ENCODE measurements at regions of chr20 and their contacts with region 1.

Region 1: GRCh38 chr20:54097236-54097529 is 26.8 kb upstream of the BCAS1 start:
- DNase-seq: no peak
- ATAC-seq: no peak
- H3K4me3 ChIP-seq: no peak overlapping the region
- H3K27ac ChIP-seq: no peak overlapping the region
- H3K4me1 ChIP-seq: no peaks in the 10 kb centered on the region
- H3K27me3 ChIP-seq: no peaks in the 10 kb centered on the region
- CTCF ChIP-seq: no peak
- POLR2A ChIP-seq: no peak

Region 2: GRCh38 chr20:54199721-54200176 is 102.6 kb after region 1 on chr20:
- intact Hi-C with region 1: loop called (anchors 5 kb)
- DNase-seq: peak; percentile 77 to 84 (median 80)
- ATAC-seq: peak; percentile 79
- H3K4me3 ChIP-seq: no peak overlapping the region
- H3K27ac ChIP-seq: no peak overlapping the region
- H3K4me1 ChIP-seq: no peaks in the 10 kb centered on the region
- H3K27me3 ChIP-seq: no peaks in the 10 kb centered on the region
- CTCF ChIP-seq: peak; percentile 84 to 89 (median 87)
- POLR2A ChIP-seq: no peak

Measured in body of pancreas (tissue), 4 donors.